GM13976 (cell line): ENCODE measurements at regions of chr3 and their contacts with region 1.

Region 1: DNA sequence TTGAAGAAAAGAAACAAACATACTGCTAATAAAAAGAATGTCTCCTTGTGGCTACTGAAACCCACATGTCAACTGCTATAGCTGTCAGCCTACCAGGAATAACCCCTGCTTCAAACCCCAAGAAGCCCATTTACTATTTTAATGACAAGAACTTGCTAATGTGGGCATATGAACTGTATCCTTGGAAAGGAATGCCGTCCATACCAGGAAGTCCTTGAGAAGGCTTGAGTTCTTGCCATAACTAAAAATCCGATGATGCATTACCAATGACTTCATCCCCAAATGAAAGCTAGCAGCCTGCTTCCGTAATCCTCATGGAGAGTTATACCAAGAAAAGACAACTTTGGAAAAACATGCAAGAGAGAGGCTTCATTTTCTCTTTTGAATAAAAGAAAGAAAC is 34.8 kb downstream of the MINDY4B start:
- DNase-seq: no peak
- CTCF ChIP-seq: no peak

Region 2: DNA sequence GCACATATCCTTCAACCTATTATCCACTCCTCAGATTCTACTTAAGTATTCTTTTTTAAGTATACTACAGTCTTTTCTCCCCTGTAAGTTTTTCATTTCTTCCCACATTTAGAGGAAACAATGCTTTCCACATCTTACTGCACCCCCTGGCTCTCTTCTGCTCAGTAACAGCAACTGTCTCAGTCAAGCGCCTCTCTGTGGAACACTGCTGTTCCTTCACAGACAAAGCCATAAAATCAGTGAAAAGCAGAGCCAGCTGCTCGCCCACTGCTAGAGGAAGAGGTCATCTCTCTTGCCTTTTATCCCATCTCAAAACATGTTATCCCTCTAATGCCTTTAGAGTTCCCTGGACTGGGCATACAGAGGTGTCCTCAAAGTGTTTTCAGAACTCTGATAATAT is 348.9 kb before region 1 on chr3:
- in situ Hi-C with region 1: loop called (anchors 25 kb)
- DNase-seq: no peak
- CTCF ChIP-seq: no peak

Region 3: GRCh38 chr3:150721285-150722130 is 148.9 kb before region 1 on chr3:
- in situ Hi-C with region 1: loop called (anchors 10 kb)
- DNase-seq: peak; percentile 71
- CTCF ChIP-seq: peak; percentile 56